ENCODE measurements at regions of chr12 and their contacts with region 1.

Region 1: DNA sequence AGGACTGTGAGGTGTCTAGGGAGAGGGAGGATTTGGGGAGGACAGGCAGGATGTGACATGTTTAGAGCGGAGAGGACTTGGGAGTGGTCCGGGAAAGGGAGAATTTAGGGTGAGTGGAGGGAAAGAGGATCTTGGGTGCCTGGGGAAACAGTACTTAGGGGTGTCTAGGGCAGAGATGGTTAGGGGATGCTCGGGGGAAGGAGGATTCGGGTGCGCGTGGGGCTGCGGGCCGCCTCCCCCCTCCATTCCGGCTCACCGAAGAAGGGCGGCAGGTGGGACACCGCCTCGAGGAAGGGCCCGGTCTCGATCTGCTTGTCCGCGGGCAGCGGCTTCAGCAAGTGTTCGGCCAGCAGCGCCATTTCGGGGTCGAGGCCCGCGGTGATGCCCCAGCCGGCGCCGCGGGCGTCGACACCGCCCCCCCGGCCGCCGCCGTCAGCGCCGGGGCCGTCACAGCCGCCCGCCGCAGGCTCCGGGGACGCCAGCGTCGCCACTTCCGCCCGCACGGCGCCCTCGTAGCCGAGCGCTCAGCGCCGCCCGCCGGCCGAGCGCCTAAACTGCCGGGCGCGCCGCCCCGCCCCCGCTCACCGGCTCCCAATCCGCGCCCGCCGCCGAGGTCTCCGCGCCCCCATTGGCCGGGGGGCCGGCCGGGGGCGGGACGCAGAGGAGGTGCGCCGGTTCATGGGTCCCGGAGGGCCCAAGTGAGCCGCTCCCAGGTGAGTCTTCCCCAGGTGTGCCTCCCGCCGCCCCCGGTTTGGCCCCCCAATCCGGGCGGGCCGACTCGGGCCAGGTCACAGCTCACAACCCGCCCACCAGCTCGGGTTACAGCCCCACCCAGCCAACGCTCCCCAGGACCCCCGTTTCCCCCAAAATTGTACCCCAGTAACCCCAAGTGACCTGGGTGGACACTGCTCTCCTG is at the start of gene GLTP:
- DNase-seq: peak; percentile 82 to 96 (median 89)
- ATAC-seq: peak; percentile 98
- H3K4me3 ChIP-seq: peak within 1 kb of the TSS; percentile 96 to 97
- H3K4me3 Mint-ChIP-seq: peak within 1 kb of the TSS; percentile 96
- H3K27ac ChIP-seq: peak within 1 kb of the TSS; percentile 86 to 92
- H3K27ac Mint-ChIP-seq: peak within 1 kb of the TSS; percentile 93
- H3K4me1 ChIP-seq: peaks cover 26% of the 10 kb centered on the region
- H3K4me1 Mint-ChIP-seq: peaks cover 46% of the 10 kb centered on the region
- H3K27me3 ChIP-seq: no peaks in the 10 kb centered on the region
- H3K27me3 Mint-ChIP-seq: no peaks in the 10 kb centered on the region
- CTCF ChIP-seq: peak; percentile 48
- total RNA-seq, gene GLTP: 36.9 to 40.7 TPM

Region 2: DNA sequence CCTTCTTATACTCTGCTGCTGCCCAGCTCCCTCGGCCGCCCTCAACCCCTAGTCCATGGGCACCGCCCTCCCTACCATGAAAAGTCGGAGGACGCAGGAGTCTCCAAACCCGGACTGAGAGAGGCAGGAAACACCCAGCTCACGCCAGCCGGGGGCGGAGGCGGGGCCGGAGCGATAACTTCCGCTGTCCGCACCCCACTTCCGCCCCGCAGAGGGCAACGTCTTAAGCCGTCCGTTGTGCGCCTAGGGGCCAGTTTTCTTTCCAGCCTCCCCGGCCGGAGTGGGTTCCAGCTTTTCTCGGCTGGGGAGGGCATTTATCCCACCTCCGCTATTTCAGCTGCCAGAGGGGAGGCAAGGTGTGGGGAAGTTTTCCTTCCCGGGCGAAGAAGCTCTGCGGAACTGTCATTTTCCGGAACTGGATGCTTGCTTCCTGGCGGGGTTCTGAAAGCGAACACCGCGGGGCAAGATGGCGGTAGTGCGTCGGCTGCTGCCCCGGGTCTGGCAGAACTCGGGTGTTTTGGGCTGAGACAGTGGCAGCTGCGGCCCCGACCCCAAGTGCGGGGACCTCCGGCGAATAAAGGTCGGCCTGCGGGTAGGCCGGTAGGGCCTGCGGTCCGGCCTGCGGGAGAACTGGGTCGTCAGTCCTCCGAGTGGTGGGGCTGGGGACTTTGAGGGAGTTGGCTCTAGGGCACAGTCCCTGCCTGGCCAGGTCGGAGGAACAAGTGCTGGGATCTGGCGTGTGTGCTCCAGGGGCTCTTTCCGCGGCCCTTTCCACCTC is 402.9 kb before region 1 on chr12 and contains the starts of genes KCTD10 and UBE3B:
- CTCF ChIA-PET with region 1: no interaction called
- POLR2A ChIA-PET with region 1: no interaction called
- intact Hi-C with region 1: loop called (anchors 2 kb)
- DNase-seq: peak; percentile 73 to 94 (median 86)
- ATAC-seq: peak; percentile 90
- H3K4me3 ChIP-seq: peak within 1 kb of the TSS; percentile 92 to 94
- H3K4me3 Mint-ChIP-seq: peak within 1 kb of the TSS; percentile 97
- H3K27ac ChIP-seq: peak within 1 kb of the TSS; percentile 76 to 94
- H3K27ac Mint-ChIP-seq: peak within 1 kb of the TSS; percentile 98
- H3K4me1 ChIP-seq: peaks cover 35% of the 10 kb centered on the region
- H3K4me1 Mint-ChIP-seq: peaks cover 51% of the 10 kb centered on the region
- H3K27me3 ChIP-seq: no peaks in the 10 kb centered on the region
- H3K27me3 Mint-ChIP-seq: no peaks in the 10 kb centered on the region
- CTCF ChIP-seq: no peak
- total RNA-seq, gene KCTD10: 26.2 to 31.3 TPM
- total RNA-seq, gene UBE3B: 16.5 to 17.8 TPM

Region 3: GRCh38 chr12:109573029-109573913 is 307.0 kb before region 1 on chr12 and contains the starts of genes MMAB and MVK:
- CTCF ChIA-PET with region 1: no interaction called
- POLR2A ChIA-PET with region 1: no interaction called
- intact Hi-C with region 1: loop called (anchors 1 kb)
- DNase-seq: peak; percentile 96 to 99 (median 98)
- ATAC-seq: peak; percentile 92
- H3K4me3 ChIP-seq: peak within 1 kb of the TSS; percentile 73 to 82
- H3K4me3 Mint-ChIP-seq: peak within 1 kb of the TSS; percentile 95
- H3K27ac ChIP-seq: peak within 1 kb of the TSS; percentile 95
- H3K27ac Mint-ChIP-seq: peak within 1 kb of the TSS; percentile 96
- H3K4me1 ChIP-seq: peaks cover 16% of the 10 kb centered on the region
- H3K4me1 Mint-ChIP-seq: peaks cover 35% of the 10 kb centered on the region
- H3K27me3 ChIP-seq: no peaks in the 10 kb centered on the region
- H3K27me3 Mint-ChIP-seq: no peaks in the 10 kb centered on the region
- CTCF ChIP-seq: no peak
- total RNA-seq, gene MMAB: 10.2 to 11.7 TPM
- total RNA-seq, gene MVK: 11.5 to 13.9 TPM

Region 4: DNA sequence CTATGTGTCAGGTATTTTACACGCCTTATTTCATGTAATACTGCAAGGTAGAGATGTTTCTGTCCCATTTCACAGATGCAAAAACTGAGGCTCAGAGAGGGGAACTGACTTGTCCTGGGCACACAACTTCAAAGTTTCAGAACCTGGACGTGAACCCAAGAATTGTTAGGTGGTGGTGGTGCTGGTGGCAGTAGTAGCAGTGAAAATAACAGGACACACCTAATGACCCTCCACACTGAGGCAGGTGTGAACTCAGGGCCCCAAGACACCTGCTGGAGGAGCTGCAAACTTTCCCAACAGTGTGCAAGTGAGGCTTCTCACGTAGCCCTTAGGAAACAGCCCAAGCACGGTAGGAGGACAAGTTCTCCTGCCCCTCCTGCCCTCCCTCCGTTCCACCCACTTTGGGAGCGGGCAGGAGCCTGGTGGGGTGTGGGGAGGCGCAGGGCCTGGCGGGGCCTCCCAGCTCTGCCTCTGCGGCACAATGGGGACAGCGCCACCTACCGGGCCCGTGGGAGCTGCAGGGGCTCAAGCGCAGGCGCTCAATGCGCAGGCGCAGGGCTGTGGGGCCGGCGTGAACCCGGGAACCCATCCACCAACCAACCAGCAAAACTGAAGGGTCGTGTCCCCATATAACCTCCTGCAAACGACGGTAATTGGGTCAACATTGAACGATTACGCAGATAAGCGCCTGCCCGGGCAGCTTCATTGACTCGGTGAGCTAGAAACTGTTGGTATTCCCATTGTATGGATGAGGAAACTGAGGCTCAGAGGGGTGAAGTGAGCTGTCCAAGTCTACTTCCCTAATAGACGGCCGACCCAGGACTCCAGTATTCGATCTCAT is 35.1 kb before region 1 on chr12:
- CTCF ChIA-PET with region 1: interaction called, 7 read pairs
- POLR2A ChIA-PET with region 1: no interaction called
- intact Hi-C with region 1: loop called in 1 of 2 experiments (anchors 1 kb)
- DNase-seq: peak; percentile 73 to 92 (median 89)
- ATAC-seq: peak; percentile 100
- H3K4me3 ChIP-seq: peak overlapping the region; percentile 19 to 36
- H3K4me3 Mint-ChIP-seq: no peak overlapping the region
- H3K27ac ChIP-seq: no peak overlapping the region
- H3K27ac Mint-ChIP-seq: no peak overlapping the region
- H3K4me1 ChIP-seq: peaks cover 9% of the 10 kb centered on the region
- H3K4me1 Mint-ChIP-seq: peaks cover 3% of the 10 kb centered on the region
- H3K27me3 ChIP-seq: no peaks in the 10 kb centered on the region
- H3K27me3 Mint-ChIP-seq: no peaks in the 10 kb centered on the region
- CTCF ChIP-seq: peak; percentile 98

Region 5: DNA sequence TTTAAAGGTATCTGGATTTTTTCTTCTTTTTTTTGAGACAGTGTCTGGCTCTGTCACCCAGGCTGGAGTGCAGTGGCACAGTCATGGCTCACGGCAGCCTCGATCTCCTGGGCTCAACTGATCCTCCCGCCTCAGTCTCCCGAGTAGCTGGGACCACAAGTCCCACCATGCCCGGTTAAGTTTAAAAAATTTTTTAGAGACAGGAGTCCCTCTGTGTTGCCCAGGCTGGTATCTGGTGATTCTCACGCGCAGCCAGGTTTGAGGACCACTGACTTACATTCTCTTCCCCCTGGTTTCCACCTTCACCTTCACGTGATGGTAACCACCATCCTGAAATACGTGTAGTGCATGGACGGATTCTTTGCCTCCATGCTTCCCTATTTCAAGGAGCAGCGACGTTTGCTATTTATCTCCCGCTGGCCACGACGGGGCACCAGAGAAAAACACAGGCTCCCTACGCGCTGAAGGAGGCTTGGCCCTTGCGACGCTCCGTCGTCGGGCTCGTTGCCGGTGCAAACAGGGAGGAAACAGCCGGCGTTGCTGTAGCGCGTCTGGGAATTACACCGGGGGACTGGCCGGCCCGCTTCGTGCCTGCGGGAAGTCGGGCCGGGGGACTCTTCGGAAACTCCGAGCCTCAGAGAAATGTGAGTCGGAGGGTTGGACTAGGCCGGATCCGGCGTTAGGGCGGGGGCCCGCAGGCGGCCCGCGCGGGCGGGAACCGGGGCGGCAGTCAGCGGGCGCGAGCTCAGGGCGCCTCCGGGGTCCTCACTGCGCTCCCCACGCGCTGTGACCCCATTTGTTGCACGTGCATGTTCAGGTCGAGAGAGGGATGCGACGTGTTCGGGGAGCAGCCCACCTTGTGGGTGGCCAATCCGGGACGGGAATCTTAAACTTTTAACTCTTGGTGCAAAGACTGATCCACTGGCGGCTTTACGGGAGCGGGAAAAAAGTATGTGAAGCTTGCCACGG is 19.8 kb after region 1 on chr12 and contains the start of gene TCHP:
- CTCF ChIA-PET with region 1: interaction called, 3 read pairs
- POLR2A ChIA-PET with region 1: interaction called, 8 read pairs
- intact Hi-C with region 1: loop called (anchors 1 kb)
- DNase-seq: peak; percentile 35 to 91 (median 72)
- ATAC-seq: peak; percentile 90
- H3K4me3 ChIP-seq: peak within 1 kb of the TSS; percentile 79 to 86
- H3K4me3 Mint-ChIP-seq: peak within 1 kb of the TSS; percentile 95
- H3K27ac ChIP-seq: peak within 1 kb of the TSS; percentile 65 to 69
- H3K27ac Mint-ChIP-seq: peak within 1 kb of the TSS; percentile 97
- H3K4me1 ChIP-seq: peaks cover 17% of the 10 kb centered on the region
- H3K4me1 Mint-ChIP-seq: peaks cover 28% of the 10 kb centered on the region
- H3K27me3 ChIP-seq: no peaks in the 10 kb centered on the region
- H3K27me3 Mint-ChIP-seq: no peaks in the 10 kb centered on the region
- CTCF ChIP-seq: no peak
- total RNA-seq, gene TCHP: 11.4 to 15.7 TPM

Region 6: DNA sequence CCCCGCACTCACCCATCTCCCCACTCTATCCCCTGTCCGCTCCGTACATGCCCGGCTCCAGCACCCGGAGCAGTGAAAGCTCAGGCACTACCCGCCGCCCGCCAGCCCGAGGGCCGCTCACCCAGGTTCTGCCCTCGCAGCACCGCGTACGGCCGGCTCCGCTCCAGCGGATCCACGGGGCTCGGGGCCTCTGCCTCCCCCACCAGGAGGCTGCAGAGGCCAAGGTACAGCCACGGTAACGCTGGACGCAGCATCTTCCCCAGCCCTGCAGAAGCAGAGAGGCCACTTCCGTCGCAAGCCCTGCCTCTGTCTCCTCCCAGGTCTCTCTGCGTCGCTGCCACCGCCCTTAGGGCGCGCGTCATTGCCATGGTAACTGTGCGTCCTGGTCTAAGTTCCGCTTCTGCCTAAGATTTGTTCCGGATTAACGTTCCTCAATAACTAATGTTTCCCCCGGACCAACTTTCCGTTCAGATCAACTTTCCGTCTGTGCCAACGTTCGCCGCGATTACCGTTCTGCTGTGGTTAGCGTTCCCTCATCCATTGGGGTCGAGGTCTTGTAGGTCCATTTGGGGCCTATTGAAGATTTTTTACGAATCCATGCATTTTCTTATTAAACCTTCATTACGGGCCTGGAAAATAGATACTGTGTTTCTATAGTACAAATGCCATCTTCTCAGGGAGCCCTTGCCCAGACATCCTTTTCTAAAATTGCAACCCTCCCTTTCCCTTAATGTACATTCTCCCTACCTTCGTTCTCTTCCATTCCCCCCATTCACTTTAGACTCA is 168.2 kb after region 1 on chr12 and contains the start of gene C12orf76:
- CTCF ChIA-PET with region 1: no interaction called
- POLR2A ChIA-PET with region 1: no interaction called
- intact Hi-C with region 1: loop called in 1 of 2 experiments (anchors 1 kb)
- DNase-seq: peak; percentile 76 to 97 (median 91)
- ATAC-seq: peak; percentile 99
- H3K4me3 ChIP-seq: peak within 1 kb of the TSS; percentile 66 to 69
- H3K4me3 Mint-ChIP-seq: peak within 1 kb of the TSS; percentile 89
- H3K27ac ChIP-seq: peak within 1 kb of the TSS; percentile 61 to 83
- H3K27ac Mint-ChIP-seq: peak within 1 kb of the TSS; percentile 90
- H3K4me1 ChIP-seq: peaks cover 21% of the 10 kb centered on the region
- H3K4me1 Mint-ChIP-seq: peaks cover 31% of the 10 kb centered on the region
- H3K27me3 ChIP-seq: no peaks in the 10 kb centered on the region
- H3K27me3 Mint-ChIP-seq: no peaks in the 10 kb centered on the region
- CTCF ChIP-seq: no peak
- total RNA-seq, gene C12orf76: 8.7 to 9.6 TPM